ENCODE measurements at regions of chr2 and their contacts with region 1.

Region 1: DNA sequence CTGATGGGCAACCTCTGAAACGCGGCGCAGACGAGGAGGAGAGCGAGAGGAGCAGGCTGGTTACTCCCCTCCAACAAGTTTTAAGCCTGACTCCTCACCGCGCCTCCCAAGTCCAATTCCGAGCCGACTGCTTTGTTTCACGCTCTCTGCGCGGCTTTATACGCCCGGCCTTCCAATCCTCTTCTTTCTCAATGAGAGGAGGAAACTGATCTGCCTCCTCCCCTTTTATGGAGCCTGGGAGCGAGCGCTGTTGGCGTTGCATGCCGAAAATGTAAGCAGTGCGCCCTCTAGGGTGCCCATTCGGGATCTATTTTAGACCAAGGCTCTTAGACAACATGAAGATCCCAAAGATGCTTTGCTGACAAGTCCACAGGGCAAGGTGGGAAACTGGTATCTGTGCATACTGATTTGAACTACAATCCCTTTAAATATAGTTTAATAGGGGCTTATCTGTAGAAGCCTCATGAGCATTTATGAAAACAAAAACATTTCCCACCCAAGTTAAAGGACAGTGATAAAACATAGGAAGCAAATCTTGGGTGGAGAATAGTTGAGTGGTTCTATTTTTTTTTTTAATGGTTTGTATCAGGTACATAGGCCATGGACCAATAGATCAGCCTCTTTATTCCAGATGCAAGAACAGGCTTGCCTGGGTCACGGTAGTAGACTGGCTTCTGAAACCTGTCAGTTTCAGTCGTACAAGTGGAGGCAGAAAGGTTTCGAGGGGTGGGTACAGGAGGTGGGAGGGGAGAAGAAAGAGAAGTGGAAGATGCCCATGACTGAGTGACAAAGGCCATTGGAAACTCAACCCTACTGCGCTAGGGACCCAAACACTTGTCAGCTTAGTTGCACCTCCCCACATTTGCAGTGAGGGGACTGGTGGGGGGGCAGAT is at the start of gene RND3:
- DNase-seq: peak; percentile 97 to 98
- ATAC-seq: peak; percentile 90
- H3K4me3 ChIP-seq: peak within 1 kb of the TSS; percentile 45 to 79
- H3K27ac ChIP-seq: peak within 1 kb of the TSS; percentile 64 to 89
- H3K4me1 ChIP-seq: peaks cover 0 to 4% of the 10 kb centered on the region in 2 donors
- H3K27me3 ChIP-seq: no peaks in the 10 kb centered on the region
- total RNA-seq, gene RND3: 24.9 to 67.0 TPM

Region 2: GRCh38 chr2:149597668-149598326 is 890.0 kb before region 1 on chr2:
- intact Hi-C with region 1: loop called (anchors 2 to 5 kb)
- DNase-seq: peak in 1 of 2 donors; percentile 51
- ATAC-seq: peak; percentile 92
- H3K4me3 ChIP-seq: peak overlapping the region in 1 of 2 donors; percentile 36
- H3K27ac ChIP-seq: no peak overlapping the region
- H3K4me1 ChIP-seq: no peaks in the 10 kb centered on the region
- H3K27me3 ChIP-seq: no peaks in the 10 kb centered on the region

Region 3: DNA sequence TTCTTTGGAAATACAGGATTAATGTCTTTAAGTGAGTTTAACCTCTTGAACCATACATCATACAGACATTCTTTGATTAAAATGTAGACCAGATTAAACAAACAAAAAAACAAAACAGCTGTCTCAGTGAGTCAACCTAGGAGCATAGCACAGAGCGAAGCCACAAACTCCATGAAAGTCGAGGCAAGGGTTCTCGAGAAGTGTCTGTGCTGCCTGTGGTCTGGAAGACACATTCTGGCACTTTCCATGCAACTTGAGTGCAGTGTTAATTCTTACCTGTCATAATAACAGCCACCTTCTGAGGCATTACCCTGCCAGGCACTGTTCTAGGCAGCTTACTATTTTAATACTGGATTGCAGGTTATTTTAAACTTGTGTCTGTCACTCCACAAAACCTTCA is 464.7 kb before region 1 on chr2:
- intact Hi-C with region 1: loop called in 1 of 2 experiments (anchors 10 kb)
- DNase-seq: no peak
- ATAC-seq: no peak
- H3K4me3 ChIP-seq: no peak overlapping the region
- H3K27ac ChIP-seq: no peak overlapping the region
- H3K4me1 ChIP-seq: no peaks in the 10 kb centered on the region
- H3K27me3 ChIP-seq: no peaks in the 10 kb centered on the region

Region 4: DNA sequence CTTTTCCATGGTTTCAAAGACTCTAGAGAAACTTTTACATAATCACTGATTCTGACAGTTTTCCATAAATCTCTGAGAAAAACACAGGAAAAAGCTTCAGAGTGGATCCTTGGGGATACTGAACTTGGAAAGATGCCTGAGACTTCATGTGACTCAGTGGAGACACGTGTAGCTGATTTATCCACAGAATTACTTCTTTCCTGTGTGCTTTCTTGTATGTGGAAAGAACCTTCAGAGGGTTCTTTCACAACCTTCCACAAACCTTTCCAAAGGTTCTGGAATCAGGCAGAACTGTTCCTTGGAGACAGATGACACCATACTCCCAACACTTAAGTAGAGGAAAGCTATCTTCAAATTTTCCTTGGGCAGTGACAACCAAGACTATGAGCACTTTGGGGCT is 207.6 kb before region 1 on chr2:
- intact Hi-C with region 1: loop called in 1 of 2 experiments (anchors 10 kb)
- DNase-seq: no peak
- ATAC-seq: peak; percentile 88
- H3K4me3 ChIP-seq: no peak overlapping the region
- H3K27ac ChIP-seq: no peak overlapping the region
- H3K4me1 ChIP-seq: no peaks in the 10 kb centered on the region
- H3K27me3 ChIP-seq: no peaks in the 10 kb centered on the region

Region 5: GRCh38 chr2:150424406-150424805 is 63.4 kb before region 1 on chr2:
- intact Hi-C with region 1: loop called in 1 of 2 experiments (anchors 5 kb)
- DNase-seq: no peak
- ATAC-seq: no peak
- H3K4me3 ChIP-seq: no peak overlapping the region
- H3K27ac ChIP-seq: no peak overlapping the region
- H3K4me1 ChIP-seq: peaks cover 0 to 2% of the 10 kb centered on the region in 2 donors
- H3K27me3 ChIP-seq: no peaks in the 10 kb centered on the region